GM18951 (cell line): ENCODE measurements at regions of chr1 and their contacts with region 1.

Region 1: GRCh38 chr1:74689621-74690363 is 16.2 kb upstream of the ERICH3 start:
- POLR2A ChIP-seq: no peak

Region 2: DNA sequence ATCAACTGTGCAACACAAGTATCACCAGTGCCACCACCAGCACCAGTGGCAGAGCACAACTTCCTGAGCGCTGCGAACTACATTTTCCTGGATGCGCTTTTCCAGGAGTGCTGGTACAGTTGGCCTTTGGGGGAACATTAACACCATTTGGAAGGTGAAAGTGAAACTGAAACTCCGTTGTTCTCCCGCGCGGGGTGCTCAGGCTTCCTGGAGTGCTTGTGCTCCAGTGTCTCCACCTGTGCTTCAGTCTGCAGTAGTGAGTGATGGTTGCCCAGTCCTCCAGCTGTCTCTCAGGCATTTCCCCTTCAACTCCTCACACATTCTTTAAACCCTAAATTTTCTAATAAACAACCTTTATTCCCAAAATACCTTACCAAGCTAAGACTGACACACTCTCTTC is 679.6 kb before region 1 on chr1:
- in situ Hi-C with region 1: loop called (anchors 25 kb)
- POLR2A ChIP-seq: no peak

Region 3: GRCh38 chr1:74193908-74194307 is 495.9 kb before region 1 on chr1:
- in situ Hi-C with region 1: no loop called
- POLR2A ChIP-seq: no peak